ENCODE measurements at regions of chr2 and their contacts with region 1.

Region 1: DNA sequence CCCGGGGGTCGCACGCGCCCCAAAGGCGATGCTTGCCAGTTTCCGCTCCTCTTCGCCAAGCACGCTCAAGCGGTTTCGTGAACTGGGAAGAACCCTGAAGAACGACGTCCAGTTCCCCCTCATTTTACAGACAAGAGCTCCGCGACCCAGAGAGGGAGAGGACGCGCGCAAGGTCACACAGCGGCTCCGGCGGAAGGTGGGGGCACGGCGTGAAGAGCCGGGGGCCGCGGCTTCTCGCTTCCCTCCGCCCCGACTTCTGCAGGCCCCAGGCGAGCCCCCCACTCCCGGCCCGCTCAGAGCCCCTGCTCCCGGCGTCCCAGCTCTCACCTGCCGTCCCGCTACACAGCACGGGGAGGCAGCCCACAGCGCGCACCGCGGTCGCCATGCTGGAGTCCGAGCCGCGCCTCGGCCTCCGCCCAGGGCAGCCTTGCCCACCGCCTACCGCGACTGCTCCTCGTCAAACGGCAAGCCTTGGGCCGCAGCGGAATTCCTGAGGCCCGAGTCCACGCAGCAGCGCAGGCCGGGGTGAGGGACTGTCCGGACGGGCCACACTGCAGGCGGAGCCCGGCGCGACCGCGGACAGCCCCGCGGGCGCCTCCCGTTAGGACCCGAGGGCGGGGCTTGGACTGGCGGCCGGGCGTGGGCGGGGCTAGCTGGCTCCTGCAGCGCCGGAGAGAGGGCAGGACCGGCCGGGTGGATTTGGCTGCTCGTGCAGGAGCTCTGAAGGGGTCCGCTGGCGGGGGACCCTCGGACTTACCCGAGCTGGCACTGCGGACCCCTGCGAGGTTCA is at the start of gene MRPS5:
- DNase-seq: peak; percentile 76 to 85 (median 79)
- H3K4me3 ChIP-seq: peak within 1 kb of the TSS; percentile 74
- H3K4me3 Mint-ChIP-seq: peak within 1 kb of the TSS; percentile 95 to 99 (median 97)
- H3K27ac ChIP-seq: peak within 1 kb of the TSS; percentile 76
- H3K27ac Mint-ChIP-seq: peak within 1 kb of the TSS; percentile 86 to 97 (median 94)
- H3K4me1 ChIP-seq: peaks cover 33% of the 10 kb centered on the region
- H3K4me1 Mint-ChIP-seq: peaks cover 44 to 53% (median 51%) of the 10 kb centered on the region in 3 donors
- H3K27me3 ChIP-seq: no peaks in the 10 kb centered on the region
- H3K27me3 Mint-ChIP-seq: peaks cover 0 to 4% of the 10 kb centered on the region in 2 donors
- total RNA-seq, gene MRPS5: 69.0 to 75.9 TPM

Region 2: GRCh38 chr2:95159690-95160449 is 38.3 kb after region 1 on chr2 and contains the start of gene ZNF514:
- CTCF ChIA-PET with region 1: interaction called, 5 read pairs
- POLR2A ChIA-PET with region 1: interaction called, 15 read pairs
- DNase-seq: peak; percentile 76 to 83 (median 79)
- H3K4me3 ChIP-seq: peak within 1 kb of the TSS; percentile 76
- H3K4me3 Mint-ChIP-seq: peak within 1 kb of the TSS; percentile 86 to 92 (median 89)
- H3K27ac ChIP-seq: peak within 1 kb of the TSS; percentile 64
- H3K27ac Mint-ChIP-seq: peak within 1 kb of the TSS; percentile 75 to 95 (median 88)
- H3K4me1 ChIP-seq: peaks cover 22% of the 10 kb centered on the region
- H3K4me1 Mint-ChIP-seq: peaks cover 12 to 34% (median 25%) of the 10 kb centered on the region in 3 donors
- H3K27me3 ChIP-seq: no peaks in the 10 kb centered on the region
- H3K27me3 Mint-ChIP-seq: no peaks in the 10 kb centered on the region
- total RNA-seq, gene ZNF514: 10.3 to 12.2 TPM

Region 3: DNA sequence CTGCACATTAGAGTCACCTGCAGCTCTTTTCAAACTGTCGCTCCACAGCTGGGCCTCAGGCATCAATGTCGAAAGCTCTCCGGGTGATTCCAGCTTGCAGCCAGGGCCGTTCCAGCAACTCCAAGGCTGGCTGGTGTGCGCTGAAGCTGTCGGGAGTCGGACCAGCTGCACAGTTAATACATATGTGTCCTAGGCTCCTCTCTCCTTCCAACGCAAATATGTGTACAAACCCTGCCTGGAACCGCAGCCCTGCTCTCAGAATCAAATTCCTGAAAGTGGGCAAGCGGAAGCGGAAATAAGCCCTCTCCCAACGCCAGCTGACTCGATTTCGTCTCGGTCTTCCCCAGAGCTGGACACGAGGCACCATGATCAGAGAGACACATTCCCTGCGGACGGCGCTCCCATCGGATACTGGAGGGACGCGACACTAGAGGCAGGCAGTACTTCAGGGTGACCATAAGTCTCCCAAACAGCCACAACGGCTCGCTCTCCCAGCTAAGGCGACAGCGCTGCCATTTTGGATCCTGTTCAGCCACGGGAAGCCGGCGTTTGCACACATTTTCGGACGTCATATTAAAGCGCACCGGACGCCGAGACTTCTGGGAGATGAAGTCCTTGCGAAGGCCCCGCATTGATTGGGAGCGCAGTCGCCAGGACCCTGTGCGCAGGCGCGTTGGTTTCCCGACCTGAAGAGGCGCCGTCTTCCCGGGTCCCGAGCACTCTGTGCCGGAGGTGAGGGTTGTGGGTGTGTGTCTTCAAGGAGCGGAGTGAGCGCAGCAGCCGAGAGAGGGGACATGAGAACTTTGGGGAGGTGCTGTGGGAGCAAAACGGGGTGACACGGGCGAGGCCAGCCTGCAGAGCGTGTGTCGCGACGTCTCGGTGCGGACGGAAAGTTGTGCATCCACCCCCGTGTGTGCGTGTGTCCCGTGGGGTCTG is 43.8 kb after region 1 on chr2 and contains the start of gene ZNF2:
- CTCF ChIA-PET with region 1: interaction called, 4 read pairs
- POLR2A ChIA-PET with region 1: interaction called, 15 read pairs
- DNase-seq: peak; percentile 95 to 98 (median 96)
- H3K4me3 ChIP-seq: peak within 1 kb of the TSS; percentile 90
- H3K4me3 Mint-ChIP-seq: peak within 1 kb of the TSS; percentile 98 to 100 (median 100)
- H3K27ac ChIP-seq: peak within 1 kb of the TSS; percentile 88
- H3K27ac Mint-ChIP-seq: peak within 1 kb of the TSS; percentile 95 to 100 (median 98)
- H3K4me1 ChIP-seq: peaks cover 19% of the 10 kb centered on the region
- H3K4me1 Mint-ChIP-seq: peaks cover 31 to 52% (median 50%) of the 10 kb centered on the region in 3 donors
- H3K27me3 ChIP-seq: no peaks in the 10 kb centered on the region
- H3K27me3 Mint-ChIP-seq: peaks cover 0 to 2% of the 10 kb centered on the region in 2 donors
- total RNA-seq, gene ZNF2: 5.3 to 5.7 TPM